ENCODE measurements at regions of chr2 and their contacts with region 1.

Region 1: GRCh38 chr2:70142590-70143313 is 48.1 kb downstream of the C2orf42 start:
- DNase-seq: peak; percentile 99
- H3K4me3 Mint-ChIP-seq: peak overlapping the region; percentile 76
- H3K27ac Mint-ChIP-seq: peak overlapping the region; percentile 89
- H3K4me1 Mint-ChIP-seq: peaks cover 24% of the 10 kb centered on the region
- H3K27me3 Mint-ChIP-seq: no peaks in the 10 kb centered on the region
- CTCF ChIP-seq: peak; percentile 90

Region 2: DNA sequence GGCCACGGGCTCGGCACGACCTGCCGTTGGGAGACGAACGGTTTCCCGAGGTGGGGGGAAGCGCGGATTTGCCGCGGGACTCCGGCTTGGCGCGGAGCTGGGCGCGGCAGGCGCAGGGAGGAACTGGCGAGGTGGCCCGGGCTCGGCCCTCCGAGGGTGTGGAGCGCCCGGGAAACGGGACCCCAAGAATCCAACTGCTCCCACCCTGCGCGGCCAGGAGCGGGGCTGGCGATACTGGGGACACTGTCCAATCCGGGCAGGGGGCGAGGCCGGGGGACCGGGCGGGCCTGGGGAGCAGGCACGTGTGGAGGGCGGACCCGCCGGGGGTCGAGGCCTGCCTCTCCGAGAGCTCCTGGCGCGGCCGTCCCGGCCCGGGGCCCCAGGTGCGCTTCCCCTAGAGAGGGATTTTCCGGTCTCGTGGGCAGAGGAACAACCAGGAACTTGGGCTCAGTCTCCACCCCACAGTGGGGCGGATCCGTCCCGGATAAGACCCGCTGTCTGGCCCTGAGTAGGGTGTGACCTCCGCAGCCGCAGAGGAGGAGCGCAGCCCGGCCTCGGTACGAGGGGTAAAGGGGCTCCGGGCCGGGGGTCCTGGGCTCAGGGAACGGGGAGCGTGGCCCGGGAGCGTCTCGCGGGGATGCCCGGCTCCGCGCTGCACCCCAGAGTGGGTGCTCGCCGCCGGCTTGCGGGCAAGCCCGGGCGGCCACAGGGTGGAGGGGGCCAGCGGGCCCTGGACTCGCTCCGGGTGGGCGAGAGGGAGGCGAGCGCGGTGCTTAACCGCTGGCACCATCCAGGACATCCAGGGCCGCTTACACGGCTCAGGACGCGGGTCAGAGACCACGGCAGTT is 400.9 kb before region 1 on chr2 and contains the start of gene ANXA4:
- CTCF ChIA-PET with region 1: no interaction called
- POLR2A ChIA-PET with region 1: interaction called, 12 read pairs
- intact Hi-C with region 1: loop called (anchors 5 kb)
- DNase-seq: peak; percentile 91
- H3K4me3 Mint-ChIP-seq: peak within 1 kb of the TSS; percentile 83
- H3K27ac Mint-ChIP-seq: peak within 1 kb of the TSS; percentile 97
- H3K4me1 Mint-ChIP-seq: peaks cover 14% of the 10 kb centered on the region
- H3K27me3 Mint-ChIP-seq: no peaks in the 10 kb centered on the region
- CTCF ChIP-seq: no peak
- total RNA-seq, gene ANXA4: 79.8 and 82.9 TPM in 2 replicates

Region 3: GRCh38 chr2:70052676-70053075 is 90.1 kb before region 1 on chr2:
- CTCF ChIA-PET with region 1: no interaction called
- POLR2A ChIA-PET with region 1: no interaction called
- intact Hi-C with region 1: no loop called
- DNase-seq: no peak
- H3K4me3 Mint-ChIP-seq: no peak overlapping the region
- H3K27ac Mint-ChIP-seq: peak overlapping the region; percentile 49
- H3K4me1 Mint-ChIP-seq: no peaks in the 10 kb centered on the region
- H3K27me3 Mint-ChIP-seq: no peaks in the 10 kb centered on the region
- CTCF ChIP-seq: no peak

Region 4: DNA sequence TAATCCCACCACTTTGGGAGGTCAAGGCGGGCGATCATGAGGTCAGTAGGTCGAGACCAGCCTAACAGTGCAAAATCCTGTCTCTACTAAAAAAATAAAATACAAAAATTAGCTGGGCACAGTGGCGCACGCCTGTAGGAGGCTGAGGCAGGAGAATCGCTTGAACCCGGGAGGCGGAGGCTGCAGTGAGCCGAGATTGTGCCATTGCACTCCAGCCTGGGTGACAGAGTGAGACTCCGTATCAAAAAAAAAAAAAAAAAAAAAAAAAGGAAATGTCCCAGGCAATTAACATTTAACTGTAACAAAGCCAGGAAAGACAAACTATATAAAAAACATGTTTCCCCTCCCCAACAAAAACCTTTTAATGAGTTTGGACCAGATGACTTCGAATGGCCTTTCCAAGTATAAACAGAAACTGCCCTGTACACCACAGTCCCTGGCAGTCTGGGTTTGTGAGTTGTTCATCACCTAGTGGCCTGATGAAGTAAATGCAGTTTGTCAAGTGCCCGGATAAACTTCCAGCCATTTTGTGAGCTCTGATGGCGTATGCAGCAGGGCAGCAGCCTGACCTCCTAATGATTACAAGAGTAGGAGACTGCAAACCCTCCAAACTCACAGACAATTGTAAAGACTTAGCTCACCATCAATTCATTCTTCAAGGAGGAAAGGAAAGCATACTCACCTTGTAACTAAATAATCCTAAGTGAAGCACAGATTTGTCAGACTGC is 72.0 kb before region 1 on chr2:
- CTCF ChIA-PET with region 1: interaction called, 8 read pairs
- POLR2A ChIA-PET with region 1: interaction called, 14 read pairs
- intact Hi-C with region 1: loop called (anchors 5 kb)
- DNase-seq: peak; percentile 85
- H3K4me3 Mint-ChIP-seq: no peak overlapping the region
- H3K27ac Mint-ChIP-seq: peak overlapping the region; percentile 7
- H3K4me1 Mint-ChIP-seq: peaks cover 8% of the 10 kb centered on the region
- H3K27me3 Mint-ChIP-seq: no peaks in the 10 kb centered on the region
- CTCF ChIP-seq: peak; percentile 50

Region 5: DNA sequence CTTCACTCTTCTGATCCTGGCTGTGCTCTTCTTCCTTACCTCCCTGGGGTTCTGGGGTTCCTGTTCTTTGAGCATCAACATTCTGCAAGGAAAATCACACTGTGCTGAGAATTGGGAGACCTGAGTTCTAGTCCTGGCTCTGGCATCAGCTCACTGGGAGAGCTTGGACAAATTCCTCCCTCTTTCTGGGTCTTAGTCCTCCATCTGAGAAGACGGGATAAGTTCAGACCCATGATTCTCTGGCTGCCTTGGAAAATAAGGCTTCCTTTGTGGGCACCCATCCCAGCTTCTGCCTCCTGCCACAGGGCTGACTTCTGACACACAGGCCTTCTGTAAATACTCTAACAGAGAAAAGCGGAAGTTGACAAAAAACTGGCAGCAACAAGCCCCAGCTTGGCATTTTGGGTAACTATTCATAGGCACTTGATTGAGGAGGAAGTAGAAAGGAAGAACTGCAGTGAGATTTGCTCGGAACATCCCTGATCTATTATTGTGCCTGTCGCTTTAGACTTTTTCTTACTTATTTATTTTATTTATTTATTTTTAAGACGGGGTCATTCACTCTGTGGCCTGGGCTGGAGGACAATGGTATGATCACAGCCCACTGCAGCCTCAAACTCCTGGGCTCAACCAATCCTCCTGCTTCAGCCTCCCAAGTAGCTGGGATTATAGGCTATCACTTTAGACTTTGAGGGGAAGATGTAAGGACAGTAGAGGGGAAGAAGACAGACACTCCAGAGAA is 47.6 kb before region 1 on chr2:
- CTCF ChIA-PET with region 1: interaction called, 6 read pairs
- POLR2A ChIA-PET with region 1: interaction called, 328 read pairs
- intact Hi-C with region 1: no loop called
- DNase-seq: no peak
- H3K4me3 Mint-ChIP-seq: no peak overlapping the region
- H3K27ac Mint-ChIP-seq: peak overlapping the region; percentile 61
- H3K4me1 Mint-ChIP-seq: peaks cover 13% of the 10 kb centered on the region
- H3K27me3 Mint-ChIP-seq: no peaks in the 10 kb centered on the region
- CTCF ChIP-seq: no peak

Region 6: GRCh38 chr2:70132244-70133126 is 10.3 kb before region 1 on chr2:
- CTCF ChIA-PET with region 1: no interaction called
- POLR2A ChIA-PET with region 1: interaction called, 41 read pairs
- intact Hi-C with region 1: no loop called
- DNase-seq: peak; percentile 43
- H3K4me3 Mint-ChIP-seq: peak overlapping the region; percentile 59
- H3K27ac Mint-ChIP-seq: peak overlapping the region; percentile 90
- H3K4me1 Mint-ChIP-seq: peaks cover 37% of the 10 kb centered on the region
- H3K27me3 Mint-ChIP-seq: no peaks in the 10 kb centered on the region
- CTCF ChIP-seq: no peak

Region 7: GRCh38 chr2:70248181-70248847 is 105.6 kb after region 1 on chr2 and contains the start of gene TIA1:
- CTCF ChIA-PET with region 1: no interaction called
- POLR2A ChIA-PET with region 1: interaction called, 33 read pairs
- intact Hi-C with region 1: no loop called
- DNase-seq: peak; percentile 99
- H3K4me3 Mint-ChIP-seq: peak within 1 kb of the TSS; percentile 82
- H3K27ac Mint-ChIP-seq: peak within 1 kb of the TSS; percentile 86
- H3K4me1 Mint-ChIP-seq: peaks cover 15% of the 10 kb centered on the region
- H3K27me3 Mint-ChIP-seq: no peaks in the 10 kb centered on the region
- CTCF ChIP-seq: no peak
- total RNA-seq, gene TIA1: 75.7 and 83.9 TPM in 2 replicates

Region 8: DNA sequence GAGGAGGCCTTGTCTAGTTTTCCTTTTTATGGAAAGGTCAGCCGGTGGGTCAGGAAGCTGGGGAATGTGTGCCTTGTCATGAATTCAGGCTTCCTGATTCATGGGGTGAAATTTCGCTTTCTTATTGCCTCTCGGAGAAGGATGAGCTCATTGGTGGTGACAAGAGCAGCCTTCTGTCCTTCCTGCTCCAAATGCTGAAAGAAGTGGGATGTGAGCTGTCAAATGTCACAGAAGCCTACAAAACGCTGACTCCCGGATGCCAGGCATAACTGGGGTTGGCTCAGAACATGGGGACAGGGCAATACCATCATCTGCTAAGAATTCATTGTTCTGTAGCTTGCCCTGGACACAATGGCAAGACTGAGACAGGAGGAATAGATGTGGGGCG is 214.9 kb after region 1 on chr2:
- CTCF ChIA-PET with region 1: no interaction called
- POLR2A ChIA-PET with region 1: no interaction called
- intact Hi-C with region 1: no loop called
- DNase-seq: no peak
- H3K4me3 Mint-ChIP-seq: no peak overlapping the region
- H3K27ac Mint-ChIP-seq: no peak overlapping the region
- H3K4me1 Mint-ChIP-seq: peaks cover 19% of the 10 kb centered on the region
- H3K27me3 Mint-ChIP-seq: no peaks in the 10 kb centered on the region
- CTCF ChIP-seq: no peak